ENCODE measurements at regions of chr20 and their contacts with region 1.

Region 1: DNA sequence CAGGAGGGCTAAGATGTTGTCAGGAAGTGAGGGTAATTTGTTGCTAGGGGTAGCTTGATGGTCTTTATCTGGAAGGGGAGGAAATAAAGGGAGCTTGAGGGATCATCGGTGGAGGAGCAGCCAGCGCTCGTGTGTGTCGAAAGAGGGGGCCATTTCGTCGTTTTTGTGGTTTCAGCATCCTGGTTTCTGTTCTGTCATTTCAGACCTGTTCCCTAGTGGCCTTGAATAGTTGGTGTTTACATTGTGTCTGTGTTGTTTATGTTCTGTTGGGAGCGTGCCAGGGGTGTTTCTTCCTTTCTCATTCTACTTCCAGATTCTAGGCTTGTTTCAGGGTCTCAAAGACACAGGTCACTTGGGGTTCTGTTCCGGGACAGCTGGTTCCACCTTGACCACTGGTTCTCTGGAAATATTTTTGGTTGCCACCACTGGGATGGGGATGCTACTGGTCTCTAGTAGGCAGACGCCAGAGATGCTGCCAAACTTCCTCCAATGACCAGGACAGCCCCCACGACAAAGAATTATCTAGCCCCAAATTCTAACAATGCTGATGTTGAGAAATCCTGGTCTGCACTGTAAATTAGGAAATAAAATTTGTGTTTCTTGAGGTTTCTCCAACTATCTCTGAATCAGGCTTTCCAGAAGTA is 113.9 kb upstream of the NAA20 start:
- H3K4me3 Mint-ChIP-seq: no peak overlapping the region
- H3K27ac Mint-ChIP-seq: peak overlapping the region; percentile 85
- H3K4me1 Mint-ChIP-seq: peaks cover 55% of the 10 kb centered on the region
- H3K27me3 Mint-ChIP-seq: no peaks in the 10 kb centered on the region

Region 2: DNA sequence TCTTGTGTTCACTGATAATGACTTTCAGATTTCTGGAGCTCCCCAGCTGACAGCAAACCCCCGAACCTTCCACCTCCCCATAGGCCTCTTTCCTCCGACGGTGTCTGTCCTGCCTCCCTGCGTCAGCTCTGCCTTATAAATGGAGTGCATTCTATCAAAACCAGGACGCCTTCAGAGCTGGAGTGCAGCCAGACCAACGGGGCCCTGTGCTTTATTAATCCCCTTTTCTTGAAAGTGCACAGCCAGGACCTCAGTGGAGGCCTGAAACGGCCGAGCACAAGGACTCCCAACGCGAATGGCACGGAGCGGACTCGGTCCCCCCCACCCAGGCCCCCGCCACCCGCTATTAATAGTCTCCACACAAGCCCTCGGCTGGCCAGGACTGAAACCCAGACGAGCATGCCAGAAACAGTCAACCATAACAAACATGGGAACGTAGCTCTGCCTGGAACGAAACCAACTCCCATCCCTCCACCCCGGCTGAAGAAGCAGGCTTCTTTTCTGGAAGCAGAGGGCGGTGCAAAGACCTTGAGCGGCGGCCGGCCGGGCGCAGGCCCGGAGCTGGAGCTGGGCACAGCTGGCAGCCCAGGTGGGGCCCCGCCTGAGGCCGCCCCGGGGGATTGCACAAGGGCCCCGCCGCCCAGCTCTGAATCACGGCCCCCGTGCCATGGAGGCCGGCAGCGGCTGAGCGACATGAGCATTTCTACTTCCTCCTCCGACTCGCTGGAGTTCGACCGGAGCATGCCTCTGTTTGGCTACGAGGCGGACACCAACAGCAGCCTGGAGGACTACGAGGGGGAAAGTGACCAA is 71.5 kb after region 1 on chr20:
- intact Hi-C with region 1: loop called (anchors 5 kb)
- H3K4me3 Mint-ChIP-seq: peak overlapping the region; percentile 87
- H3K27ac Mint-ChIP-seq: peak overlapping the region; percentile 90
- H3K4me1 Mint-ChIP-seq: peaks cover 88% of the 10 kb centered on the region
- H3K27me3 Mint-ChIP-seq: no peaks in the 10 kb centered on the region

Region 3: GRCh38 chr20:19995220-19995863 is 92.1 kb after region 1 on chr20:
- intact Hi-C with region 1: loop called (anchors 1 kb)
- H3K4me3 Mint-ChIP-seq: no peak overlapping the region
- H3K27ac Mint-ChIP-seq: peak overlapping the region; percentile 28
- H3K4me1 Mint-ChIP-seq: peaks cover 73% of the 10 kb centered on the region
- H3K27me3 Mint-ChIP-seq: no peaks in the 10 kb centered on the region